ENCODE measurements at regions of chr15 and their contacts with region 1.

Region 1: GRCh38 chr15:43749690-43750345 is 3.6 kb downstream of the PDIA3 start:
- DNase-seq: peak; percentile 69
- ATAC-seq: peak; percentile 46
- H3K4me3 Mint-ChIP-seq: peak overlapping the region; percentile 92
- H3K27ac Mint-ChIP-seq: peak overlapping the region; percentile 82
- H3K4me1 Mint-ChIP-seq: peaks cover 45% of the 10 kb centered on the region
- H3K27me3 Mint-ChIP-seq: no peaks in the 10 kb centered on the region

Region 2: GRCh38 chr15:43105778-43106485 is 643.9 kb before region 1 on chr15 and contains the start of gene UBR1:
- CTCF ChIA-PET with region 1: no interaction called
- POLR2A ChIA-PET with region 1: no interaction called
- intact Hi-C with region 1: loop called in 1 of 2 experiments (anchors 5 kb)
- DNase-seq: peak; percentile 95
- ATAC-seq: peak; percentile 94
- H3K4me3 Mint-ChIP-seq: peak within 1 kb of the TSS; percentile 93
- H3K27ac Mint-ChIP-seq: peak within 1 kb of the TSS; percentile 96
- H3K4me1 Mint-ChIP-seq: peaks cover 41% of the 10 kb centered on the region
- H3K27me3 Mint-ChIP-seq: no peaks in the 10 kb centered on the region
- total RNA-seq, gene UBR1: 26.8 to 30.6 TPM

Region 3: DNA sequence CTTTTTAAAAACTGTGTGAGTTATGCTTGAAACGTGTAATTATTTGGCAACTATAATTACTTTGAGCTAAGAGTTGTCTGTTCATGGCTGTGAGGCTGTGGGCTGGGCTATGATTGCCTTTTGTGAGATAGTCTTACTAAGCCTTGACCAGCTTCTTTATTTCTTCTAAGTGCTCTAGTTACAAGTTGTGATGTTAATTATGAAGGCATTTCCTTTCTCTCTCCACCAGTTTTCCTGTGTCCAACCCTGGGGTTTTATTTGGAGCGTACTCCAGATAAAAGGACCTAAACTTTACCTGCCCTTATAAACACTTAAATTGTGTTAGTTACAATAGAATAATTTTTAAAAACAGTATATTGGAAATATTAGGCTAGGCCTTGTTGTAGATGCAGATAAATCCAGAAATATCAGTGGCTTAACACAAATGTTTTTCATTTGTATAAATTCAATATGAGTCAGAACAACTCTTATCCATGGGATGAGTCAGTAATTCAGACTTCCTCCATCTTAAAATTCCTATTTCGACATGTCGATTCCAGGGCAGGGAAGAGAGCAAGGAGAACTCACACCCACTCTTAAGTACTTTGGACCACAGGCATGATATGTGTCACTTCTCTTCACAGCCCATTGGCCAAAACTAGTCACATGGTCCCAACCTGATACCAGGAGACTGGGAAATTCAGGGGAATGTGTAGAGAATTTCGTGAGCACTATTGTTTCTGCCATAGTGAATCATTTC is 599.5 kb before region 1 on chr15:
- CTCF ChIA-PET with region 1: no interaction called
- POLR2A ChIA-PET with region 1: no interaction called
- intact Hi-C with region 1: no loop called
- DNase-seq: no peak
- ATAC-seq: no peak
- H3K4me3 Mint-ChIP-seq: no peak overlapping the region
- H3K27ac Mint-ChIP-seq: no peak overlapping the region
- H3K4me1 Mint-ChIP-seq: peaks cover 11% of the 10 kb centered on the region
- H3K27me3 Mint-ChIP-seq: no peaks in the 10 kb centered on the region

Region 4: GRCh38 chr15:43370975-43371974 is 378.5 kb before region 1 on chr15 and contains the starts of genes TUBGCP4 and ZSCAN29:
- CTCF ChIA-PET with region 1: interaction called, 4 read pairs
- POLR2A ChIA-PET with region 1: no interaction called
- intact Hi-C with region 1: loop called in 1 of 2 experiments (anchors 2 kb)
- DNase-seq: peak; percentile 87
- ATAC-seq: peak; percentile 86
- H3K4me3 Mint-ChIP-seq: peak within 1 kb of the TSS; percentile 86
- H3K27ac Mint-ChIP-seq: peak within 1 kb of the TSS; percentile 85
- H3K4me1 Mint-ChIP-seq: peaks cover 46% of the 10 kb centered on the region
- H3K27me3 Mint-ChIP-seq: no peaks in the 10 kb centered on the region
- total RNA-seq, gene TUBGCP4: 43.6 to 44.0 TPM
- total RNA-seq, gene ZSCAN29: 20.8 to 26.4 TPM

Region 5: GRCh38 chr15:43510200-43511011 is 239.4 kb before region 1 on chr15:
- CTCF ChIA-PET with region 1: no interaction called
- POLR2A ChIA-PET with region 1: interaction called, 3 read pairs
- intact Hi-C with region 1: loop called in 1 of 2 experiments (anchors 1 kb)
- DNase-seq: peak; percentile 98
- ATAC-seq: peak; percentile 95
- H3K4me3 Mint-ChIP-seq: peak overlapping the region; percentile 91
- H3K27ac Mint-ChIP-seq: peak overlapping the region; percentile 90
- H3K4me1 Mint-ChIP-seq: peaks cover 32% of the 10 kb centered on the region
- H3K27me3 Mint-ChIP-seq: no peaks in the 10 kb centered on the region

Region 6: DNA sequence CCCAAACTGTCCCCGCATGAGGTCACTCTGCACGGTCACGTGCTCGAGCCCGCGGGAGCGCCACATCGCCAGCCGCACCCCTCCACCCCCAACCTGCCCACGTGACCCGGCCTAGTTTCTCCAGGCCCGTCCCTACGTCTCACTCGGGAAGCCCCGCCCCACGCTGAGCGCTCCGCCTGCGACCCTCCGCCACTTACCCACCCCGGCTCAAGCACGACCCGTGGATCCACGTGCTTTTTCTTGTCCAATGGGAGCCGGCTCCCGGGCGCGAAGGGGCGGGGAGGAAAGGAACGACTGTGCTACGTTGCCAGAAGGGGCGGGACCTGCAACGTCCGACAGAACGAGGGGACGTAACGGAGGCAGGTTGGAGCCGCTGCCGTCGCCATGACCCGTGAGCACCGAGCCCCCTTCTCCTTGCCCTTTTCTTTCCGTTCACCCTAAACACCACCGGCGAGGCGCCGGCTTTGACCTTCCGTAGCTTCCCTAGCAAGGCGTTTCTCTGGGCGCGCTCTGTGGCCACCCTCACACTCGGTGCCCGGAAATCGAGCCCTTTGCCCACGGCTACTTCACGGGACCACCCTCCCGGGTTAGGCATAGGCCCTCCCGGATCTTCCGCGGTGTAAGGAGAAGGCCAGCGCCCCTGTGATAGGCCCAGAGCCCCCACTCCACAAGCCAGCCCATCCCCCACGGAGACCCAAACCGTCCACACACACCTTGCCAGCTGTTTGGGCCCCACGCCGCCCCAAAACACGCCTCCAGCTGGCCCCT is 42.4 kb after region 1 on chr15 and contains the start of gene SERF2:
- CTCF ChIA-PET with region 1: no interaction called
- POLR2A ChIA-PET with region 1: no interaction called
- intact Hi-C with region 1: loop called (anchors 1 to 5 kb)
- DNase-seq: peak; percentile 100
- ATAC-seq: peak; percentile 98
- H3K4me3 Mint-ChIP-seq: peak within 1 kb of the TSS; percentile 97
- H3K27ac Mint-ChIP-seq: peak within 1 kb of the TSS; percentile 97
- H3K4me1 Mint-ChIP-seq: peaks cover 35% of the 10 kb centered on the region
- H3K27me3 Mint-ChIP-seq: no peaks in the 10 kb centered on the region
- total RNA-seq, gene SERF2: 710 to 718 TPM

Region 7: GRCh38 chr15:44426975-44427755 is 677.3 kb after region 1 on chr15 and contains the start of gene CTDSPL2:
- CTCF ChIA-PET with region 1: no interaction called
- POLR2A ChIA-PET with region 1: no interaction called
- intact Hi-C with region 1: loop called in 1 of 2 experiments (anchors 1 kb)
- DNase-seq: peak; percentile 97
- ATAC-seq: peak; percentile 98
- H3K4me3 Mint-ChIP-seq: peak within 1 kb of the TSS; percentile 98
- H3K27ac Mint-ChIP-seq: peak within 1 kb of the TSS; percentile 99
- H3K4me1 Mint-ChIP-seq: peaks cover 36% of the 10 kb centered on the region
- H3K27me3 Mint-ChIP-seq: no peaks in the 10 kb centered on the region
- total RNA-seq, gene CTDSPL2: 80.7 to 107 TPM